Keratinocyte (primary cell): ENCODE measurements at regions of chr2 and their contacts with region 1.

Region 1: DNA sequence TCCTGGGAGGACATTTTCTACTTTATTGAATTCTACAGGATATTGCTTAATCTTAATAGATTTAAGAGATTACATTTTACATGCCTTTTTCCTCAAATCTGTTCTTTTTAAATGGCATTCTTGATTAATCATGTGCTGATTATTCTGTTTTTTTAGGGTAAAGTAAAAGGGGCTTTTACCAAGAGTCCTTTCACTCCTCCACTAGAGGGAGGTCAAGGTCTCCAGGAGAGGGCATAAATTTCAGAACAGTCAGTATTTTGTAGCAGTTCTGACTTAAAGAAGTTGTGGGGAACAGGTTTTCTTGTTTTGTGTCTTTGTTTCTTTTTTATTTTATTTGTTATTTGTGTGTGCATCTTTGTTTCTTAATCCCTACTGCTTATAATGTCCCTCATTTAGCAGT is 25.4 kb downstream of the WDR75 start:
- DNase-seq: no peak
- H3K4me3 ChIP-seq: no peak overlapping the region
- H3K27ac ChIP-seq: no peak overlapping the region
- H3K4me1 ChIP-seq: no peaks in the 10 kb centered on the region
- H3K27me3 ChIP-seq: no peaks in the 10 kb centered on the region
- CTCF ChIP-seq: peak in 2 of 3 experiments; percentile 35 to 43

Region 2: DNA sequence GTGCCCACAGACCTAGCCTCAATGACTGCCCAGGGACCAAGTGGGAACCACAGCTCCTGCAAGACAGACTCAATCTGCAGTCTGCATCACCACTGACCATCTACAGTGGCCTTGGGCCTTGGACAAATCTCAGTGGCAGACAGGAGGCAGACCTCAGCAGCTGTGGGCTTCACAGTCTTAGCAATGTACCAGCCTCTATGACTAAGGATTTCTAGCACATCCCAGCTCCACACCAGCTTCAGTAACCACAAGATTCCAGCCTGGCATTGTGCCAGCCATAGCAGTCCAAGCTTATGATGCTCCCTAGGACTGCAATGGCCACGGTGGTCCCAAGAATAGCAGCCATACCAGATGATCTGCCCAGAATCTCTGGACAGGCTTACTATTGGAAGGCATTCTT is 45.0 kb before region 1 on chr2:
- dilution Hi-C with region 1: no loop called
- DNase-seq: no peak
- H3K4me3 ChIP-seq: no peak overlapping the region
- H3K27ac ChIP-seq: no peak overlapping the region
- H3K4me1 ChIP-seq: no peaks in the 10 kb centered on the region
- H3K27me3 ChIP-seq: no peaks in the 10 kb centered on the region
- CTCF ChIP-seq: peak in 1 of 3 experiments; percentile 20

Region 3: DNA sequence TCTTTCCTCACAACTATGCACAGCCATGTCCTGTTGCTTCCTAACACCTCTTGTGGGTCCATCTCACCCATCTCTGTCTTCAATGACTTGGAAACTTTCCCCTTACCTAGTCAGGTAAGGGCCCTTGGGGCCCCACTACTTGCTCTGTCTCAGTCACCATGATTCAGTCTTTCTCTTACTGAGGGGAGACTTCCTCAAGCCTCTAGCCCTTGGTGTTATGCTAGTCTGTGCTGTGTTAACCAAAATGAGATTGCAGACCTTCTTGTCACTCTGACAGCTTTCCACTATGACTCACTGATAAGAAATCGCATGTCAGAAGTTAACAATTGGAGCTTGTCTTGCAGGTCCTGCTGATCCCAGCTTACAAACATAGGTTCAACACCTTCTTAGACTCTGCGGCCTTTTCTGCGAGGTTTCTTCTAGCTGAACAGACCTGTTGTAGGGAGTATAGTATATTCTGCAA is 39.9 kb after region 1 on chr2:
- dilution Hi-C with region 1: no loop called
- DNase-seq: peak; percentile 1
- H3K4me3 ChIP-seq: no peak overlapping the region
- H3K27ac ChIP-seq: no peak overlapping the region
- H3K4me1 ChIP-seq: peaks cover 4% of the 10 kb centered on the region
- H3K27me3 ChIP-seq: no peaks in the 10 kb centered on the region
- CTCF ChIP-seq: no peak

Region 4: DNA sequence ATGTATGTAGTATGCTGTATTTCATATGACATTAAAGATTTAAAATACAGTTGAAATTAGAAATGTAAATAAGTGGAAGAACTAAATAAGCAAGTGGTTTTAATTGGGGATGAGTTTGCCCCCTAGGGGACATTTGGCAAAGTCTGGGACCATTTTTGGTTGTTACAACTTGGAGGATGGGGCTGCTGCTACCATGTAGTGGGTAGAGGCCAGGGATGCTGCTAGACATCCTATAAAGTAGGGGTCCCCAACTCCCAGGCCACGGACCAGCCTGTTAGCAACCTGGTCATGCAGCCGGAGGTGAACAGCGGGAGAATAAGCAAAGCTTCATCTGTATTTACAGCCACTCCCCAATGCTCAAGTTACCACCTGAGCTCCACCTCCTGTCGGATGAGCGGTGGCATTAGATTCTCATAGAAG is 166.7 kb after region 1 on chr2:
- dilution Hi-C with region 1: loop called (anchors 25 kb)
- DNase-seq: no peak
- H3K4me3 ChIP-seq: no peak overlapping the region
- H3K27ac ChIP-seq: no peak overlapping the region
- H3K4me1 ChIP-seq: no peaks in the 10 kb centered on the region
- H3K27me3 ChIP-seq: no peaks in the 10 kb centered on the region
- CTCF ChIP-seq: peak; percentile 38 to 46 (median 43)